Testis (tissue), 5 donors: ENCODE measurements at regions of chr19 and their contacts with region 1.

Region 1: GRCh38 chr19:48588670-48589399 is 17.7 kb upstream of the SPACA4 start:
- DNase-seq: peak; percentile 95
- H3K4me3 ChIP-seq: peak overlapping the region; percentile 4 to 49
- H3K27ac ChIP-seq: no peak overlapping the region
- H3K4me1 ChIP-seq: no peaks in the 10 kb centered on the region
- H3K27me3 ChIP-seq: no peaks in the 10 kb centered on the region
- CTCF ChIP-seq: peak; percentile 82 to 87 (median 86)
- POLR2A ChIP-seq: no peak

Region 2: DNA sequence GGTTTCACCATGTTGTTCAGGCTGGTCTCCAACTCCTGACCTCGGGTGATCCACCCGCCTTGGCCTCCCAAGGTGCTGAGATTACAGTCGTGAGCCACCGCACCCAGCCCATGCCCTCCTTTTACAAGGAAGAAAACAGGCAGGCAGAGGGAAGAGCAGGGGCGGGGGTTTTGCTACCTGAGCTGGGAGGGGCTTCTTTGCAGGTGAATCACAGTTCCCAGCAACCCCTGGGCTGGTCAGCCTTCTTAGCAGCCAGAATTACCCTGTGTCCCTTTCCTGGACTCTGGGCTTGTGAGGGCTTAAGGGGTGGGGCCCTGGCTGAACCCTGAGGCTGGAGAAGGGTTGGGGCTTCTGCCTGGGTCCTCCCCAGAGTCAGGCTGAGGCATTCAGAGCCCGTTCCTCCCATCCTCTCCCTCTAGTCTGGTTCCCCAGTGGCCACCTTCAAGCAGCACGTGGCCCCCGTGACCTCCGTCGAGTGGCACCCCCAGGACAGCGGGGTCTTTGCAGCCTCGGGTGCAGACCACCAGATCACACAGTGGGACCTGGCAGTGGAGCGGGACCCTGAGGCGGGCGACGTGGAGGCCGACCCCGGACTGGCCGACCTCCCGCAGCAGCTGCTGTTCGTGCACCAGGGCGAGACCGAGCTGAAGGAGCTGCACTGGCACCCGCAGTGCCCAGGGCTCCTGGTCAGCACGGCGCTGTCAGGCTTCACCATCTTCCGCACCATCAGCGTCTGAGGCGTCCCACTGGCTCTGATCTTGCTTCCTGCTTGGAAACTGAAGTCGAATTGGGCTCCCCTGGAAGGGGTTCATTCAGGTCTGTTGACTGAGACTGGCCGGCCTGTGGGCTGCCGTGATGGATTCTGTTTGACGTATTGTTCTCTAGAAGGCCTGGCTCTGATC is 136.3 kb before region 1 on chr19:
- intact Hi-C with region 1: no loop called
- DNase-seq: no peak
- H3K4me3 ChIP-seq: no peak overlapping the region
- H3K27ac ChIP-seq: no peak overlapping the region
- H3K4me1 ChIP-seq: no peaks in the 10 kb centered on the region
- H3K27me3 ChIP-seq: no peaks in the 10 kb centered on the region
- CTCF ChIP-seq: no peak
- POLR2A ChIP-seq: no peak

Region 3: DNA sequence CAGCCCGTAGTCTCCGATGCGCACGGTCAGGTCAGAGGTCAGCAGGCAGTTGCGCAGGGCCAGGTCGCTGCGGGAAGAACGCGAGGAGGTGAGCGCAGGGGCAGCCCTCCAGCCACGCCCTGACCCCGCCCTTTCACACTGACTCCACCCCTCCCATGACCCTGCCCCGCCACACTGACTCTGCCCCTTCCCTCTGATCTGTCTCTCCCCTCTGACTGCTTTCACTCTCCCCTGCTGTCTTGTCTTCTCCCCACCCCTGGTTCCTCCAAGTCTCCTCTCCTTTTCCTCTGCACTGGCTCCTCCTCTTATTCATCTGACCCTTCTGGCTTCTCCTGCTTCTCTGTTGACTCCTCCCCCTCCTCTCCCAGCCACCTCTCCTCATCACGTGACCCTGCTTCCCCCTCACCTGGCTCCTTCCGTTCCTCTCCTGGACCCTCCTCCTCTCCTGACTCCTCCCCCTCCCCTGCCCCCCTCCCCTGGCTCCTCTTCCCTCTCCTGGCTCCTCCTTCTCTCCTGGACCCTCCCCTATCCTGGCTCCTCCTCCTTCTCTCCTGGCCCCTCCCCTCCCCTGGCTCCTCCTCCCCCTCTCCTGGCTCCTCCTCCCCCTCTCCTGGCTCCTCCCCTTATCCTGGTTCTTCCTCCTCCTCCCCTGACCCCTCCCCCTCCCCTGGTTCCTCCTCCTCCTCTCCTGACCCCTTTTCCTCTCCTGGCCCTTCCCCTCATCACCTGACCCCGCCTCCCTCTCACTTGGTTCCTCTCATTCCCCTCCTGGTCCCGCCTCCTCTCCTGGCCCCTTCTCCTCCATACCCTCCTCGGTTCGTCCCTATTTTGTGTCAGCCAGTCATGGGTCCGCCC is 87.1 kb before region 1 on chr19:
- intact Hi-C with region 1: loop called (anchors 10 kb)
- DNase-seq: peak; percentile 44
- H3K4me3 ChIP-seq: peak overlapping the region in 1 of 2 donors; percentile 13
- H3K27ac ChIP-seq: no peak overlapping the region
- H3K4me1 ChIP-seq: no peaks in the 10 kb centered on the region
- H3K27me3 ChIP-seq: no peaks in the 10 kb centered on the region
- CTCF ChIP-seq: no peak
- POLR2A ChIP-seq: no peak

Region 4: DNA sequence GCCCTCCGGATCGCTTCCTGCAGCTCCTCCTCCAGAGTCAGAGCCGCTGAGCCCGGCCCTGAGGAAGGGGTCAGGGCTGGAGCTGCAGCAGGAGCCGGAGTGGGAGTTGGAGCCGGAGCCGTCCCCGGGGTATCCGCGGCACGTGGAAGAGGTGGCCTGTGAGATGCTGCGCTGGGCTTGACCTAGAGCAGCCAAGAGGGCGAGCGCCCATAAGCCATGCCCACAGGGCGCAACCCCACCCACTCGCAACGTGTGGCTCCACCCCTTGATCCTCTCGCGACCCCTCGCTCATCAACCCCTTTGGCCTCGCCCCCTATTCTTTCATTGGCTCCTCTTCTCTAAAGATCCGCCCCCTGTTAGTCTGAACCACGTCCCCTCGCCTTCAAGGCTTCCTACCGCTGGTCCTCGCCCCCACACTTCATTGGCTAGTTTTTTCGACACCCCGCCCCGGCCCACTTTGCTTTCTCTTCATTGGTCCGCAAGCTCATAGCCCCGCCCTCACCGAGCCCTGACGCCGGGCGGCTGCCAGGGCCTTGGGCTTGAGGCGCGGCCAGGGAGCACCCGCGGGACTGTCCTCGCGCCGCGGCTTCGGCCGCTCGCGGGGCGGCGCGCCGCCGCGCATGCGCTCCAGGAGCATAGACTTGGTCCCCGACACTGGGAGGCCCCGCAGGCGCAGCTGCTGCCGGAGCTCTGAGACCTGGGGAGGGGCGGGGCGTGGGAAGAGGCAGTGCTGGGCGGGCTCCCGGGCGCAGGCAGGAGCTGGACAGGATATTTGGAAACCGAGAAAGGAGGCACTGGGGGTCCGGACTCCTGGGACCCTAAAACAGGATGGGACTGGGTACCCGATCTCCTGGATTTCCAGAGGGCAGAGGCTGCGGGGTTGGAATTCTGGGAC is 125.3 kb after region 1 on chr19:
- intact Hi-C with region 1: no loop called
- DNase-seq: peak; percentile 99
- H3K4me3 ChIP-seq: peak overlapping the region; percentile 50 to 65
- H3K27ac ChIP-seq: peak overlapping the region; percentile 81 to 85
- H3K4me1 ChIP-seq: peaks cover 45% of the 10 kb centered on the region
- H3K27me3 ChIP-seq: no peaks in the 10 kb centered on the region
- CTCF ChIP-seq: no peak
- POLR2A ChIP-seq: no peak